ENCODE measurements at regions of chr2 and their contacts with region 1.

Region 1: GRCh38 chr2:238784671-238785527 is 63.0 kb upstream of the TWIST2 start:
- DNase-seq: peak; percentile 75 to 91
- ATAC-seq: peak; percentile 86
- H3K4me3 ChIP-seq: no peak overlapping the region
- H3K27ac ChIP-seq: no peak overlapping the region
- H3K4me1 ChIP-seq: no peaks in the 10 kb centered on the region
- H3K27me3 ChIP-seq: no peaks in the 10 kb centered on the region

Region 2: DNA sequence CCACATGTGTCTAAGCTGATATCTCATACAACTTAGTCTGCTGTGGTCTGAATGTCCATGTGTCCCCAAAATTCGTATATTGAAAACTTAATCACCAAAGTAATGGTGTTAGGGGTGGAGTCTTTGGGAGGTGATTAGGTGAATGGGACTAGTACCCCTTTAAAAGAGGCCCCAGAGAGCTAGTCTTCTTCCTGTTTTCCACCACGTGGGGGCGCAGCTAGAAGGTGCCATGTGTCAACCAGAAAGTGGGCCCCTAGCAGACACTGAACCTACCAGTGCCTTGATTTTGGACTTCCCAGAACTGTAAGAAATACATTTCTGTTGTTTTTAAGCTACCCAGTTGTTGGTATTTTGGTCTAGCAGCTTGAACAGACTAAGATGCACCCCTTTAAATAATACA is 271.6 kb before region 1 on chr2:
- intact Hi-C with region 1: loop called in 1 of 2 experiments (anchors 5 kb)
- DNase-seq: peak in 1 of 2 donors; percentile 54
- ATAC-seq: no peak
- H3K4me3 ChIP-seq: no peak overlapping the region
- H3K27ac ChIP-seq: no peak overlapping the region
- H3K4me1 ChIP-seq: no peaks in the 10 kb centered on the region
- H3K27me3 ChIP-seq: no peaks in the 10 kb centered on the region

Region 3: DNA sequence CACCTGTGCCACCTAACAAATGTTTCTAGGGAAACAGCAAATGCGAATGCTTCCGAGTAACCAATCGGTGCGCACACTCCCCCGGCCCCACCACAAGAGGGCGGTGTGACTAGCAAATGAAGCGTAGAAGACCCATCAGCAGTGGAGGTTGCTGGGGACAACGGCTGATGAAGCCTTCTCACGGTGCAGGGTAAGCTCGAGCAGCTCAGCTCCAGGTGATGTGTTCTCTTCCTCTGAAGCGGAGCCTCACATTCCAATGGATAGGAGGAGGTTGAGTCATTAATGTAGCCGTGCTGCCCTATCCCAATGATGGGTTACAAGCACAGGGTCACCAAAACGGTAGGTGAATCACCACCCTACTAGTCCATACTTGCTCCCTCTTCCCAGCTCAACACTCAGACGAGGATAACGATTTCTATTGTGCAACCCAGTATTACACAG is 64.6 kb before region 1 on chr2:
- intact Hi-C with region 1: loop called (anchors 1 to 5 kb)
- DNase-seq: peak; percentile 66 to 87
- ATAC-seq: no peak
- H3K4me3 ChIP-seq: no peak overlapping the region
- H3K27ac ChIP-seq: no peak overlapping the region
- H3K4me1 ChIP-seq: no peaks in the 10 kb centered on the region
- H3K27me3 ChIP-seq: no peaks in the 10 kb centered on the region